Stomach (tissue), 19 donors: ENCODE measurements at regions of chrX and their contacts with region 1.

Region 1: GRCh38 chrX:39814391-39814790 is 283.4 kb downstream of the BCOR start:
- DNase-seq: peak in 1 of 2 donors; percentile 48
- H3K4me3 ChIP-seq: no peak overlapping the region
- H3K27ac ChIP-seq: peak overlapping the region in 2 of 5 donors; percentile 33 to 62
- H3K4me1 ChIP-seq: peaks cover 0 to 20% (median 12%) of the 10 kb centered on the region in 4 donors
- H3K27me3 ChIP-seq: peaks cover 0 to 7% (median 4%) of the 10 kb centered on the region in 3 donors
- CTCF ChIP-seq: peak in 4 of 7 experiments; percentile 6 to 48 (median 26)
- EP300 ChIP-seq: no peak
- POLR2A ChIP-seq: no peak

Region 2: GRCh38 chrX:39755143-39756032 is 59.0 kb before region 1 on chrX:
- intact Hi-C with region 1: loop called (anchors 10 kb)
- DNase-seq: peak; percentile 78 to 91
- H3K4me3 ChIP-seq: no peak overlapping the region
- H3K27ac ChIP-seq: peak overlapping the region in 4 of 5 donors; percentile 51 to 80 (median 65)
- H3K4me1 ChIP-seq: peaks cover 5 to 38% (median 24%) of the 10 kb centered on the region in 4 donors
- H3K27me3 ChIP-seq: no peaks in the 10 kb centered on the region
- CTCF ChIP-seq: no peak
- EP300 ChIP-seq: no peak
- POLR2A ChIP-seq: no peak